ENCODE measurements at regions of chr1 and their contacts with region 1.

Region 1: DNA sequence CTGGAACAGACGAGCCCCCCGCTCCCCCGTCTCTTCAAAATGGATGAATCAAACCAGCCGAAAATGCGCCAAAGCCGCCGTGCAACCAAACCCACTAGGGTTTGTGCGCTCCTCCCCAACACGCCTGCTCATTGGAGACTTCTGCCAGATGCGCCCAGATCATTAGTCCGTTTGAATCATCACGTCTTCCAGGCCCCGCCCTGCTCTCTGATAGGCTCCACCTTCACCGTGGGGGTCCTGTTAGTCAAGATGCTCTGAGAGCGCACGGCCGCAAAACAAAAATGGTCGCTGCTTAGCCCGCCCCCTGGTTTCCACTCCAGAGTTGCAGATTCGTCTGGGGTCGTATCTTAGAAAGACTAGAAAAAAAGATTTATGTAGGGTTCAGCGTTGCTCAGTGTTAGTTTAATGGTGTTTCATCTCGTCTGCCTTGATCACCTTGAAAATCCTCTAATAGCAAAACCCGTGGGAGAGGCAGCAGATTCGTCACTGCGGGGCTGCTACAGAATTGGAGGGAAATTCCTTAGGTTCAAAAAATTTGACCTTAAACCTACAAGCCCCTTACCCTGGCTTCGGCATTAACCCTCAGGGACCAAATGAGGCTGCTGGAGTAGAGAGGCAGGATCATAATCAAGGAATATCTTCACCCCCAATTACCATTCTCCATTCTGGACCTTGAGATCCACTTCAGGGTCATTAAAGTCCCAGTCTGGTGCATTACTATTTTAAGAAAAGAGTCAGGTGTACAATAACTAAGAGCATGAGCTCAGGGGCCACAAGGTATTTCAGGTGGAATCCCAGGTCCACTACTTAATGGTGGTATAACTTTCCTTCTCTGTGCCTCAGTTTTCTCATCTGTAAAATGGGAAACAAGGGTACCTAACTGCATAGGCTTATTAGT is at the start of gene NUCKS1:
- H3K4me3 ChIP-seq: peak within 1 kb of the TSS; percentile 85
- H3K27ac ChIP-seq: peak within 1 kb of the TSS; percentile 84
- H3K4me1 ChIP-seq: 0 out of 2 replicates have a peak, but pooled peaks cover 2% of the 10 kb centered on the region
- CTCF ChIP-seq: peak; percentile 54

Region 2: DNA sequence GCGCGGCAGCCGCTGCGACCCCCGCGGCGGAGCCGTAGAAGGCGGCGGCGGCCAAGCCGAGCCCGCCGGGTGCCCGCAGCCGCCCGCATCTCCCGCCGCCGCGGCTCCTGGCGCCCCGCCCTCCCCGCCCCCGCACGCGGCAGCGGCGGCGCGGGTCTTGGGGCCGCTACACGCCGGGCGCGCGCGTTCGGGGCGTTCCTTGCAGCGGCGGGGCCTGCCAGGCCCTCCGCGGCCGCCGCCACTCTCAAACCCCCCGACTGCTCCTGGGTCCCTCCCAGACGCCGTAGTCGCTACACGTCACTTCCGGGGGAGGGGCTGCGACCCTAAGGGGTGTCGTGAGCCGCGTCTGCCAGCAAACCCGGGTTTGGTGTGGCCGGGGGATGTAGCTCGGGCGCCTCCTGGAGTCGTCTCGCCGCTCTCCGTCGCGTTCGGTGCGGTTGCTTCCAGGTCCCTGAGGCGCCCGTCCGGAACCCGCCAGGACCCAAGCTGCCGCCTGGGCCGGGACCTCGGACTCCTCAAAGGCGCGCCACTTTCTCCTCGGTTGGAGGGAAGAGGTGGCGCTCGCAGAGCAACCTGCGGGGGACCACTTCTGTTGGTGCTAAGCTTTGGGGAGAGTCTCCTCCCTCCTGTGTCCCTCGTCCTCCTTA is 118.5 kb before region 1 on chr1 and contains the start of gene ELK4:
- CTCF ChIA-PET with region 1: no interaction called
- POLR2A ChIA-PET with region 1: interaction called, 12 read pairs
- H3K4me3 ChIP-seq: peak within 1 kb of the TSS; percentile 83
- H3K27ac ChIP-seq: peak within 1 kb of the TSS; percentile 97
- H3K4me1 ChIP-seq: no peaks in the 10 kb centered on the region
- CTCF ChIP-seq: peak; percentile 95

Region 3: DNA sequence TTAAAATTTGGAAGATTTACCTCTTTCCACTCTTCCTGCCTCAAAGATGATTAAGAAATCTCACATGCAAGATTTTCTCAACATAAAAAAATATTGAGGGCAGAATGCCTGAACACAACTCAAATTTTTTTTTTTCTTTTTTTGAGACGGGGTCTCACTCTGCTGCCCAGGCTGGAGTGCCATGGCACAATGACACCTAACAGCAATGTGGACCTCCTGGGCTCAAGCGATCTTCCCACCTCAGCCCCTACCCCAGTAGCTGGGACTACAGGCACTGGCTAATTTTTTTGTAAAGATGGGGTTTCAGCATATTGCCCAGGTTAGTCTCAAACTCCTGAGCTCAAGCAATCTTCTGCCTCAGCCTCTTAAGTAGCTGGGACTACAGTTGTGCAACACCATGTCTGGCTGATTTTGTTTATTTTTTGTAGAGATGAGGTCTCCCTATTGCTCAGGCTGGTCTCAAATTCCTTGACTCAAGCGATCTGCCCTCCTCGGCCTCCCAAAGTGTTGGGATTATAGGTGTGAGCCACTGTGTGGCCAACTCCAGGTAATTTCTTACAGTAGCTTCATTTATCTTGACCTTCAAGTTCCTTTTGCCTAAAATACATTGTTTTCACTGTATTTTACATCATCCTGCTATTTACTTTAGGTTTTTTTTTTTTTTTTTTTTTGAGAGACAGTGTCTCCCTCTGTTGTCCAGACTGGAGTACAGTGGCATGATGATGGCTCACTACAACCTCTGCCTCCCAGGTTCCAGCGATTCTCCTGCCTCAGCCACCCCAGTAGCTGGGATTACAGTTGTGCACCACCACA is 10.8 kb before region 1 on chr1:
- CTCF ChIA-PET with region 1: interaction called, 6 read pairs
- POLR2A ChIA-PET with region 1: interaction called, 11 read pairs
- H3K4me3 ChIP-seq: no peak overlapping the region
- H3K27ac ChIP-seq: no peak overlapping the region
- H3K4me1 ChIP-seq: peaks cover 17% of the 10 kb centered on the region
- CTCF ChIP-seq: peak; percentile 40; the same call in 1 of the 2 replicates

Region 4: GRCh38 chr1:205775015-205775716 is 24.8 kb after region 1 on chr1 and contains the start of gene RAB29:
- CTCF ChIA-PET with region 1: no interaction called
- POLR2A ChIA-PET with region 1: interaction called, 10 read pairs
- H3K4me3 ChIP-seq: peak within 1 kb of the TSS; percentile 70
- H3K27ac ChIP-seq: no peak within 1 kb of the TSS; the same call in 1 of the 2 replicates
- H3K4me1 ChIP-seq: no peaks in the 10 kb centered on the region
- CTCF ChIP-seq: 0 out of 2 replicates have a peak, but pooled peaks have one; percentile 14

Measured in HEK293 (cell line).